ENCODE measurements at regions of chr16 and their contacts with region 1.

Region 1: DNA sequence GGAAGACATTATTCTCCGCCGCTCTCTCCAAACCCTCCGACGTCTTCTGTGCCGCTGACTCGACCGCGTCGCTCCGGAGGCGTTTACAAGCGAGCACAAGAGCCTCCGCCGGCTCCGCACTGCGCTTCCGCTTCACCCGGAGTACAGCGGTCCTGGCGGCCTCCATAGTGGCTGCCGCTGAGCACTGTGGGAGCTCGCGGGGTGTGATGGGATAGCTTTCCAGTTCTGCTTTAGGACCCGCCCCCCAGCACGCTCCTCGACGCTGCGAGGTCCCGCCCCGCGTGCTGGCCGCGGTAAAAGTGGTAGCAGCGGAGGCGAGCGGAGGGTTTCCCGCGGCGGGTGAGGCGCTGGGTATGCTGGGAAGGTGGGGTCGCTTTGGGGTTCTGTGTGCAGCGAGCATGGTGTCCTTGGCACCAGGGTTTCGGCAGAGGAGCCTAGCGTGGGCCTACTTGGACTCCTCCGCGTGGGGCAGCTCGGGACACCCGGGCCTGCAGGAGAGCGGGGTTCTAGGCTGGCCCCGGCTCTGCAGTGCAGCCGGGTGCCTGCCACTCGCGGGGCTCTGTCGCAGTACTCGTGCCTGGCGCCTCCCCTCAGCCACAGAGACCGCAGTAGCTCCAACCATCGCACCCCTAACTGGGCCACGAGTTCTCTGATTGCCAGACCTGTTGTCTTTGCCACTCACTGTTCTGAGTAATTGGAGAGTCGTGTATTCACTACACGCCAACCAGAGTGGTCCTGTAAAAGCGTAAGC is at the starts of genes PRMT7 and SLC7A6OS:
- DNase-seq: peak; percentile 95
- H3K4me3 ChIP-seq: peak within 1 kb of the TSS; percentile 80 to 84 (median 83)
- H3K27ac ChIP-seq: peak within 1 kb of the TSS; percentile 58
- H3K4me1 ChIP-seq: peaks cover 20% of the 10 kb centered on the region
- H3K27me3 ChIP-seq: no peaks in the 10 kb centered on the region
- CTCF ChIP-seq: no peak
- POLR2A ChIP-seq: peak; percentile 96
- total RNA-seq, gene PRMT7: 33.8 and 43.4 TPM in 2 replicates
- total RNA-seq, gene SLC7A6OS: 22.0 and 22.9 TPM in 2 replicates

Region 2: DNA sequence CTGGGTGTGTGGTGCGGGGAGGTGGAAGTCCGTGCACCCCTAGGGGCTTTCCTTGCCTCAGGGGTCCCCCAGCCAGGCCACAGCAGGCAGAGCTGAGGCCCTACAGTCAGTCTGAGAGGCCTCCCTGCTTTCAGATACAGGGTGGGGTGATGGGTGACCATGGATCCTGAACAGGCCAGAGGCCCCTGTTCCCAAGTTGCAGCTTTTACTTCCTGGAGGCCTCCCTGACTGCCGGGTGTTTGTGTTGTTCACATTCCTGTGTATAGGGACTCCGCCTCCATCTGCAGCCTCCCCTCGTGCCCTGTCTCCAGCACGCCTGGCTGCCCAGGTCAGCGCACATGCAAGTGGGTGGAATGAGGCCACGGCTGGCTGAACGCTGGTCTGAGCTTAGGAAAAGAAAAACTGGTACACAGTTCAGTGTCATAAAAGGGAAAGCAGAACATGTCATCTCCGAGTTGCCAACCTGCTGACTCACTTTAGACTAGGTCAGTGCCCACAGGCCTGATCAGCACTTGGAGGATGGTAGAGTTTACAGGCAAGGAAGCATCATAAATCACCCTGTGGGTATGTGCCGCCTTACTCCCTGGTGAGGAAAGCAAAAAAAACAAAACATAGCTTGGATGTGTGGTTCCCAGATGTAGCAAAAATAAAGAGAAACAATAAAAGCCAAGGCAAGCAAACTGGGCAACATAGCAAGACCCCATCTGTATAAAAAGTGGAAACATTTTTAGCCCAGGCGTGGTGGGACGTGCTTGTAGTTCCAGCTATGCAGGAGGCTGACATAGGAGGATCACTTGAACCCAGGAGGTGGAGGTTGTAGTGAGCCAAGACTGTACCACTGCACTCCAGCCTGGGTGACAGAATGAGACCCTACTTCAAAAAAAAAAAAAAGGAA is 52.8 kb before region 1 on chr16:
- CTCF ChIA-PET with region 1: interaction called, 33 read pairs
- POLR2A ChIA-PET with region 1: interaction called, 6 read pairs
- dilution Hi-C with region 1: no loop called
- intact Hi-C with region 1: no loop called
- DNase-seq: peak; percentile 63
- H3K4me3 ChIP-seq: no peak overlapping the region
- H3K27ac ChIP-seq: peak overlapping the region; percentile 27
- H3K4me1 ChIP-seq: peaks cover 8% of the 10 kb centered on the region
- H3K27me3 ChIP-seq: no peaks in the 10 kb centered on the region
- CTCF ChIP-seq: no peak
- POLR2A ChIP-seq: no peak

Region 3: DNA sequence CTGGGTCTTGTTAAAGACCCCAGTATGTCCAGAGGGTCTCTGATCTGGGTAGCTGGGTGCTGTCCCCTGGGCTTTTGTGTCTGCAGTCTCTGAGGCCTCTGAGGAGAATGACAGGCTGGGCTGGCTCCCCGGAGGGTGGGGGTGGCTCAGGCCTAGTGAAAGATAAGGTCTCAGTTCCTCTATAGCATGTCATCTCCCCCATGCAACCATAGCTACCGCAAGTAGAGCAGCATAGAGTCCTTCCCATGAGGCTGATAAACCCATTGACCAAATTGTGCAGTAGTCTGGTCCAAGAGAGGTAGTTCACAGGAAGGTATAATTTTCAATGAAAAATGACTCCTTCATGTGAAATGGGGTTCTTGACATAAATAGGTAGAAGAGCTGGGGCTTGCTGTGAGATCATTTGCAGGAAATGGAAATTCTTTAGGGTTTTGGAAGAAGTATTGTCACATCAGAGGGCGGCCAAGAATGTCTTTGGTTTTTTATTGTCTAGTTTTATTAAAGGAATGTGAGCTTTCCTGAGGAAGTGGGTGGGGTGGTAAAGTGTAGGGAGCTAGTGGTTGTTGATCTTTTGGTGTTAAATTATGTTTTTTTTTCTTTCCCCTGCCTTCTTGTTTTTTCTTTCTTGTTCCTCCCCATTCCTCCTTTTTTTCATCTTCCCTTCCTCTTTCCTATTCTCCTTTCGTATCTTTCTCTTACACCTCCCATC is 21.2 kb before region 1 on chr16:
- CTCF ChIA-PET with region 1: interaction called, 6 read pairs
- POLR2A ChIA-PET with region 1: interaction called, 7 read pairs
- dilution Hi-C with region 1: no loop called
- intact Hi-C with region 1: loop called (anchors 1 kb)
- DNase-seq: peak; percentile 76
- H3K4me3 ChIP-seq: no peak overlapping the region
- H3K27ac ChIP-seq: peak overlapping the region; percentile 88
- H3K4me1 ChIP-seq: peaks cover 65% of the 10 kb centered on the region
- H3K27me3 ChIP-seq: no peaks in the 10 kb centered on the region
- CTCF ChIP-seq: no peak
- POLR2A ChIP-seq: peak; percentile 78

Region 4: GRCh38 chr16:68538880-68539701 is 228.2 kb after region 1 on chr16 and contains the start of gene ZFP90:
- CTCF ChIA-PET with region 1: no interaction called
- POLR2A ChIA-PET with region 1: no interaction called
- dilution Hi-C with region 1: no loop called
- intact Hi-C with region 1: no loop called
- DNase-seq: peak; percentile 85
- H3K4me3 ChIP-seq: peak within 1 kb of the TSS; percentile 69 to 78 (median 69)
- H3K27ac ChIP-seq: no peak within 1 kb of the TSS
- H3K4me1 ChIP-seq: peaks cover 8% of the 10 kb centered on the region
- H3K27me3 ChIP-seq: no peaks in the 10 kb centered on the region
- CTCF ChIP-seq: no peak
- POLR2A ChIP-seq: peak; percentile 81
- total RNA-seq, gene ZFP90: 18.4 and 22.4 TPM in 2 replicates

Measured in endothelial cell of umbilical vein (primary cell).